CD8-positive, alpha-beta T cell (primary cell): ENCODE measurements at regions of chr12 and their contacts with region 1.

Region 1: GRCh38 chr12:121060149-121061001 is 21.3 kb upstream of the OASL start:
- DNase-seq: peak; percentile 33 to 89 (median 63)
- ATAC-seq: peak; percentile 97
- H3K4me3 ChIP-seq: peak overlapping the region; percentile 59 to 68
- H3K4me3 Mint-ChIP-seq: peak overlapping the region; percentile 84
- H3K27ac ChIP-seq: peak overlapping the region; percentile 69 to 97
- H3K27ac Mint-ChIP-seq: peak overlapping the region; percentile 92
- H3K4me1 ChIP-seq: peaks cover 11% of the 10 kb centered on the region
- H3K4me1 Mint-ChIP-seq: peaks cover 12% of the 10 kb centered on the region
- H3K27me3 ChIP-seq: no peaks in the 10 kb centered on the region
- H3K27me3 Mint-ChIP-seq: no peaks in the 10 kb centered on the region
- CTCF ChIP-seq: peak; percentile 64

Region 2: GRCh38 chr12:121005346-121005815 is 55.0 kb before region 1 on chr12:
- CTCF ChIA-PET with region 1: interaction called, 12 read pairs
- POLR2A ChIA-PET with region 1: interaction called, 3 read pairs
- intact Hi-C with region 1: loop called in 1 of 2 experiments (anchors 1 kb)
- DNase-seq: peak in 7 of 9 experiments; percentile 11 to 66 (median 33)
- ATAC-seq: peak; percentile 71
- H3K4me3 ChIP-seq: no peak overlapping the region
- H3K4me3 Mint-ChIP-seq: no peak overlapping the region
- H3K27ac ChIP-seq: no peak overlapping the region
- H3K27ac Mint-ChIP-seq: no peak overlapping the region
- H3K4me1 ChIP-seq: no peaks in the 10 kb centered on the region
- H3K4me1 Mint-ChIP-seq: peaks cover 4% of the 10 kb centered on the region
- H3K27me3 ChIP-seq: no peaks in the 10 kb centered on the region
- H3K27me3 Mint-ChIP-seq: no peaks in the 10 kb centered on the region
- CTCF ChIP-seq: peak; percentile 50

Region 3: GRCh38 chr12:121026274-121027045 is 33.9 kb before region 1 on chr12:
- CTCF ChIA-PET with region 1: interaction called, 12 read pairs
- POLR2A ChIA-PET with region 1: interaction called, 5 read pairs
- intact Hi-C with region 1: no loop called
- DNase-seq: no peak
- ATAC-seq: no peak
- H3K4me3 ChIP-seq: no peak overlapping the region
- H3K4me3 Mint-ChIP-seq: no peak overlapping the region
- H3K27ac ChIP-seq: no peak overlapping the region
- H3K27ac Mint-ChIP-seq: no peak overlapping the region
- H3K4me1 ChIP-seq: no peaks in the 10 kb centered on the region
- H3K4me1 Mint-ChIP-seq: peaks cover 3% of the 10 kb centered on the region
- H3K27me3 ChIP-seq: no peaks in the 10 kb centered on the region
- H3K27me3 Mint-ChIP-seq: no peaks in the 10 kb centered on the region
- CTCF ChIP-seq: no peak

Region 4: DNA sequence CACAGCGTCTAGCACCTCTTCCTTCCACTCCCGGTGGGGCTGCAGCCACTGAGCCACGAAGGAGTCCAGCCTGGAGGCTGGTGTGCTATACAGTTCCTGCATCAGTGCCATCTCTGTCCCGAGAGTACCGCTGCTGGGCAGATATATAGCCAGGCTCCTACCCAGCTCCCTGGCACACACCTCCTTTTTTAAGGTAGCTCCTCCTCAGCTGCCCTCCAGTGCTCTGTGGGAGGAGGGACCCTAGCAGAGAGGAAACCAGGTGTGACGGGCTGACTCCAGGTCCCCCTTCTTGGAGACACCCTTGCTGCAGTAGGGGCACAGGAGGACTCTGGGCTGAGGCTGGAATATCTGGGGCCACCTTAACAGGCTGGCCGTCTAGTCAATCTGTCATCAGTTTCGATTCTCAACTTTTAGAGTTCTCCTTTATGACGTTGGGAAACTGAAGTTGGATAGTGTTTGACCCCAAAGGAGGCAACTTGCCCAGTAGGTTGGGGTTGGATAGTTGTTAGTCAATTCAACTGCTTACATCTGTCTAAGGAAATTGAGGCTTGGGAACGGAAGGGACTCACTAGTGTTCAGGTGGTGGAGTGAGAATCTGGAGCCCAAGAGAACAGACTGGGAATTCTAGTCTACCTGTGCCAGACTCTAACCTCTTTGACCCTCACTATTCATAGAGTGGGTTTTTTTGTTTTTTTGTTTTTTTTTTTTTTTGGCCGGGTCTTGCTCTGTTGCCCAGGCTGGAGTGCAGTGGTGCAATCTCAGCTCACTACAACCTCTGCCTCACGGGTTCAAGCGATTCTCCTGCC is 21.3 kb before region 1 on chr12 and contains the start of gene OASL:
- CTCF ChIA-PET with region 1: interaction called, 9 read pairs
- POLR2A ChIA-PET with region 1: interaction called, 5 read pairs
- intact Hi-C with region 1: loop called (anchors 1 to 2 kb)
- DNase-seq: peak; percentile 46 to 86 (median 64)
- ATAC-seq: peak; percentile 56
- H3K4me3 ChIP-seq: peak within 1 kb of the TSS; percentile 77 to 84
- H3K4me3 Mint-ChIP-seq: peak within 1 kb of the TSS; percentile 96
- H3K27ac ChIP-seq: peak within 1 kb of the TSS; percentile 58 to 87
- H3K27ac Mint-ChIP-seq: peak within 1 kb of the TSS; percentile 95
- H3K4me1 ChIP-seq: peaks cover 42% of the 10 kb centered on the region
- H3K4me1 Mint-ChIP-seq: peaks cover 45% of the 10 kb centered on the region
- H3K27me3 ChIP-seq: no peaks in the 10 kb centered on the region
- H3K27me3 Mint-ChIP-seq: no peaks in the 10 kb centered on the region
- CTCF ChIP-seq: no peak
- total RNA-seq, gene OASL: 34.5 to 36.5 TPM

Region 5: GRCh38 chr12:121110211-121110940 is 50.0 kb after region 1 on chr12:
- CTCF ChIA-PET with region 1: interaction called, 45 read pairs
- POLR2A ChIA-PET with region 1: no interaction called
- intact Hi-C with region 1: loop called in 1 of 2 experiments (anchors 1 kb)
- DNase-seq: peak; percentile 19 to 83 (median 67)
- ATAC-seq: peak; percentile 82
- H3K4me3 ChIP-seq: no peak overlapping the region
- H3K4me3 Mint-ChIP-seq: no peak overlapping the region
- H3K27ac ChIP-seq: no peak overlapping the region
- H3K27ac Mint-ChIP-seq: no peak overlapping the region
- H3K4me1 ChIP-seq: no peaks in the 10 kb centered on the region
- H3K4me1 Mint-ChIP-seq: peaks cover 3% of the 10 kb centered on the region
- H3K27me3 ChIP-seq: no peaks in the 10 kb centered on the region
- H3K27me3 Mint-ChIP-seq: no peaks in the 10 kb centered on the region
- CTCF ChIP-seq: peak; percentile 93